ENCODE measurements at regions of chr2 and their contacts with region 1.

Region 1: GRCh38 chr2:70142590-70143313 is 48.1 kb downstream of the C2orf42 start:
- DNase-seq: peak; percentile 98 to 100 (median 100)
- ATAC-seq: peak; percentile 74
- H3K4me3 ChIP-seq: peak overlapping the region; percentile 65
- H3K4me3 Mint-ChIP-seq: peak overlapping the region; percentile 99
- H3K27ac ChIP-seq: peak overlapping the region; percentile 97 to 99
- H3K27ac Mint-ChIP-seq: peak overlapping the region; percentile 99
- H3K4me1 ChIP-seq: peaks cover 60% of the 10 kb centered on the region
- H3K4me1 Mint-ChIP-seq: peaks cover 54% of the 10 kb centered on the region
- H3K27me3 ChIP-seq: no peaks in the 10 kb centered on the region
- H3K27me3 Mint-ChIP-seq: no peaks in the 10 kb centered on the region
- CTCF ChIP-seq: peak; percentile 86

Region 2: DNA sequence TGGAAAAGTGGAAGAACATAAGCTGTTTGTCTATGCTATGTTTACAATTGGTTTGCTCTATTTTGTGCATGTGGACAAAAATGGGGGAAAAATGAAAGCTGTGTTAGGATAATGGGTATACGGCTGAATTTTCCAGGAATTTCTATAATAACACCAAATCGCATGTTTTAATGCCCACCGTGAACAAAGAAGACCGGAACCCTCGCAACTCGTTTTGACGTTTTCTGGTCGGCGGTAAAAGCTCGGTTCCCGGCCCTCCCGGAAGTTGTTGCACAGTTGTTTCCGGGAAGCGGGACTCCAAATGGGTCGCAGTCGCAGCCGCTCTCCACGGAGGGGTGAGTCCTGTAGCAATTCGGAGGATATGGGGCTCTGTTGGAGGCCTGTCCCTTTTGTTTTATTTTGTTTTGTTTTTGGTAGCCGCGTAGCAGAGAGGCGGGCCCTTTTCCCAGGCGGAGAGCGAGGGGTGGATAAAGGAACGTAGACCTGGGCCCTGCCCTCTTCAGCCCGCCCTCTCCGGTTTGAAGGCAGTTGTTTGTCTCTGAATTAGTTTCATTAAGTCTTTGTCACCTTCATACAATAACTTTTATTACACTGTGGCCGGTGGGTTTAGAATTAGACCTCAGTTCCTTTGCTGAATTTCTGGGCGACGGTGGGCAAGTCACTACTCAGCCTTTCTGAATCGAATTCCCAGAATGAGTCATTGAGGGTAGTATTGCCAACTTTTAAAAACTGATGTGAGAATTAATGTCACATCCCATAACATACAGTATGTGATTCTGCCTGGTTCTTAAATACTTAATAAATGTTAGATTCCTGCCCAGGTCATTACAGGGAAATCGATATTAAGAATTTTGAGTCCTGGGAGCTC is 248.8 kb before region 1 on chr2 and contains the start of gene SNRNP27:
- CTCF ChIA-PET with region 1: no interaction called
- POLR2A ChIA-PET with region 1: interaction called, 19 read pairs
- intact Hi-C with region 1: no loop called
- DNase-seq: peak; percentile 74 to 90 (median 81)
- ATAC-seq: peak; percentile 93
- H3K4me3 ChIP-seq: peak within 1 kb of the TSS; percentile 84
- H3K4me3 Mint-ChIP-seq: peak within 1 kb of the TSS; percentile 100
- H3K27ac ChIP-seq: peak within 1 kb of the TSS; percentile 66 to 77
- H3K27ac Mint-ChIP-seq: peak within 1 kb of the TSS; percentile 99
- H3K4me1 ChIP-seq: peaks cover 19% of the 10 kb centered on the region
- H3K4me1 Mint-ChIP-seq: peaks cover 51% of the 10 kb centered on the region
- H3K27me3 ChIP-seq: no peaks in the 10 kb centered on the region
- H3K27me3 Mint-ChIP-seq: no peaks in the 10 kb centered on the region
- CTCF ChIP-seq: no peak
- total RNA-seq, gene SNRNP27: 50.9 to 54.8 TPM

Region 3: DNA sequence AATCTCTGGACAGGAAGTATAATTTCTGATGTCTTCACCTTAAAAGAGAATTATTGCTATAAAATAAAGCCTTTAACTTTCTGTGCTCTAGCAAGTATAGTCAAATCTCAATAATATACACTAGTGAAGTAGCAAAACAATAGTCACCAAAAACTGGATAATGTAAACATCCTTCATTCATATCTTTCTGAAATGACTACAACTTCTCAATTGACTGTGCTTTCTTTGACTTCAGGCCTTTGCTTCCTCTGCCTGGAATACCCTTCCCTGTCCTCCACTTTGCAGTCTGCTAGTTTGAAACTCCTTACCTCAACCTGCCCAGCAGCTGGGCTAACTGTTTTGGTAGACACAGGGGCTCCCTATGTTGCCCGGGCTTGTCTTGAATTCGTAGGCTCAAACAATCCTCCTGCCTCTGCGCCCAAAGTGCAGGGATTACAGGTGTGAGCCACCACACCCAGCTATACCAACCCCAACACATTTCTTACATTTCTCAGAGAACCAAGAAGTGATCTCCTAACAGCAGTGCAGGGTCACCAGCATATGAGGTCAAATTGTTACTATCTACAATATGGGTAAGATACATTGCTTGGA is 62.0 kb before region 1 on chr2:
- CTCF ChIA-PET with region 1: interaction called, 47 read pairs
- POLR2A ChIA-PET with region 1: interaction called, 932 read pairs
- intact Hi-C with region 1: no loop called
- DNase-seq: no peak
- ATAC-seq: no peak
- H3K4me3 ChIP-seq: no peak overlapping the region
- H3K4me3 Mint-ChIP-seq: no peak overlapping the region
- H3K27ac ChIP-seq: no peak overlapping the region
- H3K27ac Mint-ChIP-seq: peak overlapping the region; percentile 64
- H3K4me1 ChIP-seq: peaks cover 52% of the 10 kb centered on the region
- H3K4me1 Mint-ChIP-seq: peaks cover 67% of the 10 kb centered on the region
- H3K27me3 ChIP-seq: no peaks in the 10 kb centered on the region
- H3K27me3 Mint-ChIP-seq: no peaks in the 10 kb centered on the region
- CTCF ChIP-seq: no peak

Region 4: GRCh38 chr2:70104231-70105111 is 38.3 kb before region 1 on chr2:
- CTCF ChIA-PET with region 1: interaction called, 8 read pairs
- POLR2A ChIA-PET with region 1: interaction called, 70 read pairs
- intact Hi-C with region 1: no loop called
- DNase-seq: peak in 4 of 14 experiments; percentile 38 to 70 (median 55)
- ATAC-seq: no peak
- H3K4me3 ChIP-seq: peak overlapping the region; percentile 18
- H3K4me3 Mint-ChIP-seq: peak overlapping the region; percentile 83
- H3K27ac ChIP-seq: peak overlapping the region; percentile 66 to 70
- H3K27ac Mint-ChIP-seq: peak overlapping the region; percentile 96
- H3K4me1 ChIP-seq: peaks cover 41% of the 10 kb centered on the region
- H3K4me1 Mint-ChIP-seq: peaks cover 52% of the 10 kb centered on the region
- H3K27me3 ChIP-seq: no peaks in the 10 kb centered on the region
- H3K27me3 Mint-ChIP-seq: no peaks in the 10 kb centered on the region
- CTCF ChIP-seq: no peak

Region 5: GRCh38 chr2:70124983-70125480 is 17.7 kb before region 1 on chr2:
- CTCF ChIA-PET with region 1: interaction called, 23 read pairs
- POLR2A ChIA-PET with region 1: interaction called, 382 read pairs
- intact Hi-C with region 1: loop called (anchors 1 kb)
- DNase-seq: peak; percentile 57 to 88 (median 62)
- ATAC-seq: peak; percentile 59
- H3K4me3 ChIP-seq: peak overlapping the region; percentile 83
- H3K4me3 Mint-ChIP-seq: peak overlapping the region; percentile 93
- H3K27ac ChIP-seq: peak overlapping the region; percentile 92 to 99
- H3K27ac Mint-ChIP-seq: peak overlapping the region; percentile 99
- H3K4me1 ChIP-seq: peaks cover 72% of the 10 kb centered on the region
- H3K4me1 Mint-ChIP-seq: peaks cover 76% of the 10 kb centered on the region
- H3K27me3 ChIP-seq: no peaks in the 10 kb centered on the region
- H3K27me3 Mint-ChIP-seq: no peaks in the 10 kb centered on the region
- CTCF ChIP-seq: no peak

Region 6: DNA sequence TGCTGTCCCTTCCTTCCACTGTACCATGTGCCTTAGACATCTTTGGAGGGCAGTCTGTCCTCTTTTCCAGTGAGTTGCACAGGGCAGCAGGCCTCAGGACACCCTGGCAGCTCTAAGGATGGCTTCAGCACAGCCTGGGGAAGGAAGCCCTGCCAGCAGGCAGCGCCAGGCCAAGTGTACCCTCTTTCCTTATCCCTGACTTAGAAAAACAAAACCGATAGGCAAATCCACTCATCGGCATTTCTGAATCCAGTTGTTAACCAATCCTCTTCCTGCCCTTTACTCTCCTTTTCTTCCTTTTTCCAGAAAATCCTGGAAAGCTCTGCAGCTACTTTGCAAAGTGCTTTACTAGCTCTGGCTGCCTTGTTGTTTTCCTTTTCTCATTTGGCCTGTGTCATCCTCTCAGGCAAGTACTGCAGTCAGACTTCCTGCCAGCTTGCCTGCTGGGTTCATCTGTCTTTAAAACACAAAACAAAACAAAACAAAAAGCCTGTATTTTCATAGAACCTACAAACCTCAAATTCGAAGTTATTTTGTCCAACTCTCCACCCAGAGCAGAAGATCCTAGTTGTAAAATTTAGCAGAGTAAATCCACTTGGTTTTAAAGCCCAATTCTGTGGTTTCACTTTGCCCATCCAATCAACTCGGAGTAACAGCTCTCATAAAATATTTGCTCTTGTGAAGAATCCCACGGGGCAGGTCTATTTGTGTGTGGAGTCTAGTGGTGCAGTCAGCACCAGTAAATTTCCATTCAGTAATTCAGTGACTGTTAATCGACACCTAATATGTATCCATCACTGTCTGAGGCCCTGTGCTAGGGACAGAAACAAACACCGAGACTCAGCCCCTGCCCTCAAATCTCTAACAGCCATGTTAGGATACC is 10.3 kb before region 1 on chr2:
- CTCF ChIA-PET with region 1: interaction called, 17 read pairs
- POLR2A ChIA-PET with region 1: interaction called, 382 read pairs
- intact Hi-C with region 1: loop called in 1 of 2 experiments (anchors 1 kb)
- DNase-seq: peak in 8 of 14 experiments; percentile 34 to 80 (median 60)
- ATAC-seq: peak; percentile 62
- H3K4me3 ChIP-seq: peak overlapping the region; percentile 54
- H3K4me3 Mint-ChIP-seq: peak overlapping the region; percentile 83
- H3K27ac ChIP-seq: peak overlapping the region; percentile 76 to 84
- H3K27ac Mint-ChIP-seq: peak overlapping the region; percentile 96
- H3K4me1 ChIP-seq: peaks cover 88% of the 10 kb centered on the region
- H3K4me1 Mint-ChIP-seq: peaks cover 72% of the 10 kb centered on the region
- H3K27me3 ChIP-seq: no peaks in the 10 kb centered on the region
- H3K27me3 Mint-ChIP-seq: no peaks in the 10 kb centered on the region
- CTCF ChIP-seq: no peak